OCI-LY7 (cell line): ENCODE measurements at regions of chr7 and their contacts with region 1.

Region 1: GRCh38 chr7:142811154-142811737 is 40.5 kb downstream of the PRSS2 start:
- DNase-seq: peak; percentile 85
- H3K4me3 ChIP-seq: no peak overlapping the region
- H3K27ac ChIP-seq: peak overlapping the region; percentile 100
- H3K4me1 ChIP-seq: peaks cover 74% of the 10 kb centered on the region
- CTCF ChIP-seq: peak; percentile 89

Region 2: DNA sequence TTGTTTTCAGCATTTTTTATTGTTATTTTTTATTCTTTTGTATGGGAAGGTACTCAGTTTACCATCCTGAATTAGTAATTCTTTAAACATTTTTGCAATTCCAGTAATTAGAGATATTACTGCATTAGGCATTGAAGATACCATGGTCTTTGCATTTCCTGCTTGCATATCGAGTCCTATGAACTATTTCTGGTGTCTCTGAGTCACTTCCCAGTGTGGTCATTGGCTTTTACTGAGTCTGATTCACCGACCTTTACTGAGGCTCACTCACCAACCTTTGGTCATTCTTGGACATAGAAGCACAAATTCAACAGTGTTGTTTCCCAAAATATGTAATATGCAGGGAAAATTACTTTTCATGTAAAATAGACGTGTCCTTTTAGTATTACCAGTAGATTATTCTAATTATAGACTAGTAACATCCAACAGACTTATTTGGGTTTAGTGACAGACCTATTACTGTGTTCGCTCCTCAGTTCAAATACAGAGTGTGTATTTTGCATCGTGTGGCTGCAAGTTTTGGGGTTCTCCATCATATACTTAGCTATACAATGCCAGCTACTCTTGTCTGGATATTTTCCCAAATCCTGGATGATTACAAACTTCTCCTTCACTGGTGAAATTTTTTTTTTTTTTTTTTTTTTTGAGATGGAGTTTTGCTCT is 242.7 kb before region 1 on chr7:
- CTCF ChIA-PET with region 1: no interaction called
- POLR2A ChIA-PET with region 1: no interaction called
- intact Hi-C with region 1: no loop called
- DNase-seq: no peak
- H3K4me3 ChIP-seq: no peak overlapping the region
- H3K27ac ChIP-seq: no peak overlapping the region
- H3K4me1 ChIP-seq: no peaks in the 10 kb centered on the region
- CTCF ChIP-seq: no peak

Region 3: GRCh38 chr7:142632291-142633134 is 178.7 kb before region 1 on chr7:
- CTCF ChIA-PET with region 1: interaction called, 6 read pairs
- POLR2A ChIA-PET with region 1: interaction called, 8 read pairs
- intact Hi-C with region 1: loop called (anchors 1 kb)
- DNase-seq: peak; percentile 82
- H3K4me3 ChIP-seq: no peak overlapping the region
- H3K27ac ChIP-seq: no peak overlapping the region
- H3K4me1 ChIP-seq: no peaks in the 10 kb centered on the region
- CTCF ChIP-seq: peak; percentile 90

Region 4: GRCh38 chr7:142711746-142712619 is 99.3 kb before region 1 on chr7:
- CTCF ChIA-PET with region 1: interaction called, 17 read pairs
- POLR2A ChIA-PET with region 1: interaction called, 58 read pairs
- intact Hi-C with region 1: loop called (anchors 1 kb)
- DNase-seq: peak; percentile 74
- H3K4me3 ChIP-seq: peak overlapping the region; percentile 58
- H3K27ac ChIP-seq: no peak overlapping the region
- H3K4me1 ChIP-seq: peaks cover 46% of the 10 kb centered on the region
- CTCF ChIP-seq: peak; percentile 98

Region 5: GRCh38 chr7:142749218-142749993 is 61.8 kb before region 1 on chr7 and contains the start of gene PRSS1:
- CTCF ChIA-PET with region 1: no interaction called
- POLR2A ChIA-PET with region 1: no interaction called
- intact Hi-C with region 1: no loop called
- DNase-seq: no peak
- H3K4me3 ChIP-seq: no peak within 1 kb of the TSS
- H3K27ac ChIP-seq: no peak within 1 kb of the TSS
- H3K4me1 ChIP-seq: no peaks in the 10 kb centered on the region
- CTCF ChIP-seq: no peak
- total RNA-seq, gene PRSS1: not detected in 2 replicates

Region 6: GRCh38 chr7:142771353-142771723 is 39.9 kb before region 1 on chr7:
- CTCF ChIA-PET with region 1: interaction called, 4 read pairs
- POLR2A ChIA-PET with region 1: interaction called, 21 read pairs
- intact Hi-C with region 1: loop called (anchors 1 kb)
- DNase-seq: peak; percentile 91
- H3K4me3 ChIP-seq: peak overlapping the region; percentile 7
- H3K27ac ChIP-seq: peak overlapping the region; percentile 78
- H3K4me1 ChIP-seq: peaks cover 35% of the 10 kb centered on the region
- CTCF ChIP-seq: no peak

Region 7: GRCh38 chr7:142796608-142797385 is 14.4 kb before region 1 on chr7:
- CTCF ChIA-PET with region 1: interaction called, 90 read pairs
- POLR2A ChIA-PET with region 1: interaction called, 666 read pairs
- intact Hi-C with region 1: loop called (anchors 1 kb)
- DNase-seq: peak; percentile 58
- H3K4me3 ChIP-seq: peak overlapping the region; percentile 81
- H3K27ac ChIP-seq: peak overlapping the region; percentile 88
- H3K4me1 ChIP-seq: peaks cover 73% of the 10 kb centered on the region
- CTCF ChIP-seq: no peak

Region 8: GRCh38 chr7:142833174-142834048 is 22.2 kb after region 1 on chr7:
- CTCF ChIA-PET with region 1: no interaction called
- POLR2A ChIA-PET with region 1: no interaction called
- intact Hi-C with region 1: no loop called
- DNase-seq: no peak
- H3K4me3 ChIP-seq: no peak overlapping the region
- H3K27ac ChIP-seq: no peak overlapping the region
- H3K4me1 ChIP-seq: no peaks in the 10 kb centered on the region
- CTCF ChIP-seq: no peak

Region 9: DNA sequence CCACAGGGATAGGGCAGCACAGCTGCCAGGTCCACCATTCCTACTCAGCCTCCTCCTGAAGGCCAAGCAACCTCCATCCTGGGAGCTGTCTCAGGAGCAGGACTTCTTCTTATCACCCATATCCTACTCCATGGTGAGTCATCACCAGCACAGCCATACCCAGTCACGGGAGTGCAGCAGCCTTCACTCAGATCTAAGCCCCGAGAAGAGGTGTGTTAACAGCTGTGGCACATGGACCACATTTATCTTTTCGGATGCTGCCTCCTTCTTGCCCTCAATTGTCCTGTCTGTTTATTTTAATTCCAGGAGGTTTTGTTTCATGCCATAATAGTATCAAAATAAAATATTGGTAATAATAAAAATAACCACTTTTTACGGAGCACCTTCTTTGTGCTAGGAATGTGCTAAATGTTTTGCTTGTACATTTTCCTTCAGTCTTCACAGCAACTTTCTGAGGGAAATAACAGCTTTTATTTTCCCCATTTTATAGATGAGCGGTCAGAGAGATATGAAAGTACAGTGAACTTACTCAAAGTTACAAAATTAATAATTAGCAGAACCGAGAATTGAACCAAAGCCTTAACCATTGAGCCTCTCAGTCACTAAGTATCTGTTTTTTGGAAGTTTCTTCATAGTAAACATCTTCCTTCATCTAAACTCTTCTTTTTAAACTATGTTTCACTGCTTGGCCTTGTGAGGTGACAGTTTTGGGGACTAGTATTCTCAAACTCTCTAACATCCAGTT is 153.4 kb after region 1 on chr7:
- CTCF ChIA-PET with region 1: no interaction called
- POLR2A ChIA-PET with region 1: no interaction called
- intact Hi-C with region 1: no loop called
- DNase-seq: no peak
- H3K4me3 ChIP-seq: no peak overlapping the region
- H3K27ac ChIP-seq: no peak overlapping the region
- H3K4me1 ChIP-seq: no peaks in the 10 kb centered on the region
- CTCF ChIP-seq: no peak

Region 10: GRCh38 chr7:143287935-143288826 is 476.9 kb after region 1 on chr7 and contains the start of gene CASP2:
- CTCF ChIA-PET with region 1: no interaction called
- POLR2A ChIA-PET with region 1: no interaction called
- intact Hi-C with region 1: loop called (anchors 5 kb)
- DNase-seq: peak; percentile 96
- H3K4me3 ChIP-seq: peak within 1 kb of the TSS; percentile 95
- H3K27ac ChIP-seq: peak within 1 kb of the TSS; percentile 66
- H3K4me1 ChIP-seq: peaks cover 36% of the 10 kb centered on the region
- CTCF ChIP-seq: 0 out of 2 replicates have a peak, but pooled peaks have one; percentile 34
- total RNA-seq, gene CASP2: 27.2 and 33.9 TPM in 2 replicates